ENCODE measurements at regions of chr16 and their contacts with region 1.

Region 1: GRCh38 chr16:89507834-89508590 is at the start of gene SPG7:
- DNase-seq: peak in 1 of 2 experiments; percentile 95
- H3K4me3 ChIP-seq: peak within 1 kb of the TSS; percentile 91 to 95 (median 94)
- H3K27ac ChIP-seq: peak within 1 kb of the TSS; percentile 82
- H3K4me1 ChIP-seq: peaks cover 0 to 4% (median 0%) of the 10 kb centered on the region in 4 experiments; a peak in 4 of 7 replicates
- H3K27me3 ChIP-seq: peaks cover 0 to 4% (median 2%) of the 10 kb centered on the region in 4 experiments; a peak in 3 of 7 replicates
- CTCF ChIP-seq: 0 out of 4 replicates have a peak, but pooled peaks of 1 of the 3 experiments have one; percentile 3
- EP300 ChIP-seq: no peak
- POLR2A ChIP-seq: peak; percentile 83 to 88
- RAD21 ChIP-seq: no peak; a peak in 1 of 4 replicates
- total RNA-seq, gene SPG7: 109 and 113 TPM in 2 replicates

Region 2: DNA sequence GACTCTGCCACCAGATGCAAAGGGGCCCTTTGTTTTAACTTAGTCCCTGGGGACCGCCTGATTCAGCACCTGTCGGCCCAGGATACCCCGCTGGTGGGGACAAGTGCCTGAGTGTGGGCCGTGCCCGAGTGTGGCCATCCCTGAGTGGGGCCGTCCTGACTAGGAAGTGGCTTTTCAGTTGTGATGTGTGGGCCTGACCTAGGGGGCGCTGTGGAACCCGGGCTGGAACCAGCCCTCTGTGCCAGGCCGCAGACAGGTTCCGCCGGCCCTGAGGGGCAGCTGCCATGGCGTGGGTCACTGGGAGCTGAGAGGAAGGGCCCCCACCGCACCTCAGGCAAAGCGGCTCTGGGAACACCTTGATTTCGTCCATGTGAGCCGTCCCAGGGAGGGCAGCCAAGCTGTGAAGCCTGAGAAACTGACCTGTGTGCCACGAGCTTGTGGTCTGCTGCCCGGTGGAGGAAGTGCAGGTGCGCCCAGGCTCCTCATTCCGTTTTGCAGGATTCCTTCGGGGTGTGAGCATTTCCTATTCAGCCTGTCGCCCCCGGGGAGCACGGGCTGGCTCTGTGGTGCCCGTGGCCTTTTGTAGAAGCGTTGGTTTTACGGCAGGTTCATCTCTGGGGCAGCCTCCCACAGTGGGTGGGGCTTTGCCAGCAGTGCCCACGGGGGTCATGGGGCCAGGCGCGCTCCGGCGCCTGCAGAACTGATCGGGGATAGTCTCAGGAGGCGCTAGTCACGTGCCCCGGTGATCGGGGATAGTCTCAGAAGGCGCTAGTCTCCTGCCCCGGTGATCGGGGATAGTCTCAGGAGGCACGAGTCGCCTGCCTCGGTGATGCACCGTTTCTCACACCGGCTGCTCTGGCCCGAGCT is 57.7 kb after region 1 on chr16:
- CTCF ChIA-PET with region 1: no interaction called
- POLR2A ChIA-PET with region 1: interaction called, 11 read pairs
- DNase-seq: peak in 1 of 2 experiments; percentile 94
- H3K4me3 ChIP-seq: peak overlapping the region; percentile 18 to 69 (median 47); a peak in 7 of 8 replicates
- H3K27ac ChIP-seq: peak overlapping the region; percentile 32; the same call in 1 of the 2 replicates
- H3K4me1 ChIP-seq: peaks cover 5 to 31% (median 9%) of the 10 kb centered on the region in 4 experiments
- H3K27me3 ChIP-seq: no peaks in the 10 kb centered on the region
- CTCF ChIP-seq: peak; percentile 65 to 79 (median 76)
- EP300 ChIP-seq: no peak
- POLR2A ChIP-seq: peak in 1 of 2 experiments; percentile 47; a peak in 2 of 3 replicates
- RAD21 ChIP-seq: peak in 1 of 2 experiments; percentile 34; a peak in 1 of 4 replicates